ENCODE measurements at regions of chr10 and their contacts with region 1.

Region 1: GRCh38 chr10:123559066-123559822 is 106.9 kb upstream of the GPR26 start:
- DNase-seq: peak; percentile 91

Region 2: GRCh38 chr10:123043409-123043925 is 515.8 kb before region 1 on chr10:
- intact Hi-C with region 1: loop called in 1 of 2 experiments (anchors 10 kb)
- DNase-seq: no peak

Region 3: GRCh38 chr10:123132576-123133477 is 426.4 kb before region 1 on chr10:
- intact Hi-C with region 1: loop called (anchors 5 kb)
- DNase-seq: peak; percentile 95

Region 4: DNA sequence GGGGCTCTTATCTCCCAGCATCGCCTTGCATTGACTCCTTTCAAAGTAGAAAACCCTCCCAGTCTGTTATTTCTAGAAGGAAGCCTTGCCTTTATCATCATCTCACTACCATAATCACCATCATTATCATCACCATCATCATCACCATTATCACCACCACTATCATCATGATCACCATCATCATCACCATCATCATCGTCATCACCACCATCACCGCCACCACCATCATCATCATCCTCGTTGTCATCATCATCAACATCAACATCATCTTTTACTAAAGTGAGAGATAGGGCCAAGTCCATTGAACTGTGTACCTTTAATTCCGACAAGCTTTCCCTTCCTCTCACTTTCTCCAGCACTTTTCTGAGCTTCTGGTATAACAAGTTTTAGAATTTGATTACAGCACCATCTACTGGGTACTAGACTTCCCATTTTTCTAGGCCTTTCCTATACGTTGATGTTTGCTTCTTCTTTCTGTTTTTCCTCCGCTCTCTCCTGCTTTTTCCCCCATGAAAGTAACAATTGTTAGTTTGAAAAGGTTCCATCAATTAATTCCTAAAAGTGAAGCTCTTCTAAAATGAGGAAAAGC is 178.7 kb before region 1 on chr10:
- intact Hi-C with region 1: no loop called
- DNase-seq: no peak

Region 5: GRCh38 chr10:124461438-124462347 is 902.4 kb after region 1 on chr10 and contains the start of gene LHPP:
- intact Hi-C with region 1: no loop called
- DNase-seq: peak; percentile 96
- total RNA-seq, gene LHPP: 11.9 to 13.0 TPM